ENCODE measurements at regions of chr10 and their contacts with region 1.

Region 1: GRCh38 chr10:119103903-119104652 is at the start of gene DENND10:
- DNase-seq: peak; percentile 69
- ATAC-seq: peak; percentile 91
- H3K4me3 Mint-ChIP-seq: peak within 1 kb of the TSS; percentile 75
- H3K27ac Mint-ChIP-seq: peak within 1 kb of the TSS; percentile 68
- H3K4me1 Mint-ChIP-seq: peaks cover 16% of the 10 kb centered on the region
- H3K27me3 Mint-ChIP-seq: no peaks in the 10 kb centered on the region
- CTCF ChIP-seq: no peak
- total RNA-seq, gene DENND10: 14.4 and 15.0 TPM in 2 replicates

Region 2: DNA sequence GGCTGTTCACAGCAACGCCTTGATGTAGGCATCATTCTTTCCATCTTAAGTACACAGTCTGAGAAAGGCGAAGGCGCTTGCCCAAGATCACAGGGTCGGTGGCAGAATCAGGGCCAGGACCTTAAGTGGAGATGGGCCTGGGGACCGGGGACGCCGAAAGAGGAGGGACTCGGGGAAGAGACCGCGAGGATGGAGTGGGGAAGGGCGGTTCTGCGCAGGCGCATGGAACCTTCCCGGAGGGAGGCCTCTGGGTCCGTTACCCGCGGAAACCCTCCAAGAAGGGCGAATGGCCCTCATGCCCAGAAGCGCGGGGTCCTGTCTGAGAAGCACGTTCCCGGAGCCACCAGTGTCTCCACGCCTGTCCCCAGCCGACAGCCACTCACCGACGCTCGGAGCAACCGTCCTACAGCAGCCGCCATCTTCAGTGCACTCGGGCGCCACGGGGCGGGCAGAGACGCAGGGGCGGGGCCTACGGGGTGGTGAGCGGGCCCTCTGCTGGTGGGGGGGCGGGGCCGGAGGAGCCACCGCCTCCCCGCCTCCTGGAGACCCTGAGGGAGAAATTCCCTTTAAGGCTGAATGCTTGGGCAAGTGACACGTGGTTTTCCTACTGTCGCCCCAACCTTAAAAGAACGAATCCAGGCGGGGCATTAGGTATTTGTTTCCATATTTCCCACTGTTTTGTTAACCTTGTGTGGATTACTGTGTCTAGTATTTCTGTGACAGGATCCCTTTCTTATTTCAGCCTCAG is 74.5 kb after region 1 on chr10 and contains the start of gene PRDX3:
- CTCF ChIA-PET with region 1: no interaction called
- POLR2A ChIA-PET with region 1: no interaction called
- intact Hi-C with region 1: loop called (anchors 1 kb)
- DNase-seq: peak; percentile 92
- ATAC-seq: peak; percentile 99
- H3K4me3 Mint-ChIP-seq: peak within 1 kb of the TSS; percentile 98
- H3K27ac Mint-ChIP-seq: peak within 1 kb of the TSS; percentile 93
- H3K4me1 Mint-ChIP-seq: peaks cover 26% of the 10 kb centered on the region
- H3K27me3 Mint-ChIP-seq: no peaks in the 10 kb centered on the region
- CTCF ChIP-seq: no peak
- total RNA-seq, gene PRDX3: 62.8 and 63.7 TPM in 2 replicates

Region 3: DNA sequence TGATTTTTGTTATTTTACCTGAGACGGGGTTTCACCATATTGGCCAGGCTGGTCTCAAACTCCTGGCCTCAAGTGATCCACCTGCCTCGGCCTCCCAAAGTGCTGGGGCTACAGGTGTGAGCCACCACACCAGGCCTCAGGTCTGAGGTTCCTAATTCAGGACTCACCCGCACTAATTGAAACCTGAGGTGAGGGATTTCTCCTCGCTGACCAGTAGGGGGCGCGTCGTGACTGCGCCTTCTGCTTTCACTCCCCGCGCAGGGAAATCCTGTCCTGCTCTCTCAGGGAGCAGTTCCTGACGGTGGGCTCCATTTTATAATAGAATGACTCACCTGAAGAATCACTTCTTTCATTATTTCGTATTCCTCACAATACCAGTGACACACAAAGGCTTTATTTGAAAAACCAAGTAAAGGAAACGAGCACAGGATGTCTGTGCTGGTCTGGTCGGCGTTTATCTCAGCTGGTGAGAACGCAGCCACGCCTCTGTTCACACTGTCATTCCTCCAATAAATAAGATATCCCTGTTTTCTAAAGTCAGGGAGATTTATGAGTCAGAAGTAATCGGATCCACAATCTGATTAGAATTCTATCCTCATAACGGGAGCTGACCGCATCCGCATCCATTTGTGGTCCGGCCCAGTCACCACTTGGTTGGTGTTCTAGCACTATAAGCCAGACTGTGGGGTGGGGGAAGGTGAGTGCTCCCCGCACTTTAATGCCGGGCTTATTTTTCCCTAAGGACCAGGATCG is 582.5 kb after region 1 on chr10:
- CTCF ChIA-PET with region 1: no interaction called
- POLR2A ChIA-PET with region 1: interaction called, 11 read pairs
- intact Hi-C with region 1: no loop called
- DNase-seq: peak; percentile 68
- ATAC-seq: peak; percentile 93
- H3K4me3 Mint-ChIP-seq: peak overlapping the region; percentile 71
- H3K27ac Mint-ChIP-seq: peak overlapping the region; percentile 77
- H3K4me1 Mint-ChIP-seq: peaks cover 28% of the 10 kb centered on the region
- H3K27me3 Mint-ChIP-seq: peaks cover 3% of the 10 kb centered on the region
- CTCF ChIP-seq: peak; percentile 93

Measured in activated B cell treated with CpG ODN at 0.5 μM for 24 hours (primary cell).